ENCODE measurements at regions of chr20 and their contacts with region 1.

Region 1: GRCh38 chr20:17431621-17432364 is 99.4 kb downstream of the BFSP1 start:
- DNase-seq: peak; percentile 76
- CTCF ChIP-seq: peak; percentile 80

Region 2: DNA sequence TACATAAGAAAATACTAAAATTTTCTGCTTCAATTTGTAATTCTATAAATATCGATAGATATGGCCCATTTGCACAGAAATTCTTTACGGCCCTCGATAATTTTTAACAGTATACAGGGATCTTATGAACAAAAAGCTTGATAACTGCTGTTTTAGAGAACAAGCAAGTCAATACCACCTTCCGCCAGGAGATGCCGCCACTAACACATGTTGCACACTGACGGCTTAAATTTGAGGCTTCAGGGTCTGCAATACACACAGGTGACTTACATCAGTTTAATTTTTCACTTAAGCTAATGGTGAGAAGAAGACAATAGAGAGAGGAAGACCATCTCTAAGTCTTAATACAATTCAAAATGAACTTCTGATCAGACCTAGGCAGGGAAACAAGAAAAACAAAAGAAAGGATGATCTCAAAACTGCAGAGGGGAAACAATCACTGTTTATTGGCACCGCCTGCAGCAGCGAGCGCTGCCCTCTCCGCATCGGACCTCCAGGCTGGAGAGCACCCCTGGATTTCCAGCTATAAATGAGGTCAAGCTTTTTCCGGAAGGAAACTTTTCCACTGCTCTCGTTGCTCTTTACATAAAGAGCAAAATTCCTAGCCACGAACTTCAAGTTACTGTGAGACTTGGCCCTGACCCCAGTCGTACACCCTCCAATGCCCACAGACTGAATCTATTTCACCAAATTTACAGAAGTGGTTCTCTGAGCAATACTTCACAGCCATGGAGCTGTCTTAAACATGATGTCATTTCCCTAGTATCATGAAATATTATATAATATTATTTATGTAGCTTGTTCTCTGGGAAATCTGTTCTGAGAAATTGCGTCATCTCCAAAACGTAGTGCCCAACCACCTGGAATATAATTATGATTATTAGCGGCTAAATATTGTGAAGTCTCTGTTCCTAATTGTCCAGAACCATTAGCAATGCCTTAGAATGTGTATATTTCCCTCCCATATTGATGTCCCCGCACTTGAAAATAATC is 629.6 kb before region 1 on chr20:
- in situ Hi-C with region 1: loop called (anchors 10 kb)
- DNase-seq: peak; percentile 54
- CTCF ChIP-seq: peak; percentile 64

Region 3: DNA sequence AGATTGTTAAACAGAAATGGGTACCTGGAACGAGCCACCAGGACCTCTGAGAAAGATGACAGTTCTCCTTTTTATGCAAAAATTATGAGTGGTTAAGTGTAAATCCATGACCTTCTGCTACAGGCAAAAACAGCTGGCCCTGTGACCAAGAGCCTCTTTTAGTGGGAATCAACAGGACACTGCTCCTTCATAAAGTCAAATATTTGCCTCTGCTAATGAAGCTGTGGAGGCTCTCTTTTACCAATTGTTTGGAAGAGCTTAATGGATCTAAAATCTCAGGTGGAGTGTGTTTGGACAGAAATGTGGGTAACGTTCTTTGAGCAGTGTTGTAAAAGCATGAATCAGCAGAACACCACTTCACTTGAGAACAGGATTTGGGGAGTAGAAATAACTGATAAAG is 322.5 kb before region 1 on chr20:
- in situ Hi-C with region 1: no loop called
- DNase-seq: no peak
- CTCF ChIP-seq: no peak

Measured in GM13976 (cell line).